ENCODE measurements at regions of chr7 and their contacts with region 1.

Region 1: GRCh38 chr7:909358-910329 is 33.3 kb downstream of the GET4 start:
- DNase-seq: peak; percentile 80
- ATAC-seq: peak; percentile 65 to 67

Region 2: GRCh38 chr7:954330-955238 is 44.9 kb after region 1 on chr7 and contains the start of gene ADAP1:
- intact Hi-C with region 1: loop called in 1 of 2 experiments (anchors 5 kb)
- DNase-seq: peak; percentile 51
- ATAC-seq: peak; percentile 53 to 60
- total RNA-seq, gene ADAP1: 6.9 to 8.2 TPM

Measured in left cardiac atrium (tissue), 4 donors.